IMR-90 (cell line): ENCODE measurements at regions of chrX and their contacts with region 1.

Region 1: GRCh38 chrX:95218974-95219373 is 1465.7 kb upstream of the DIAPH2 start:
- DNase-seq: no peak
- ATAC-seq: no peak
- H3K4me3 ChIP-seq: no peak overlapping the region
- H3K27ac ChIP-seq: no peak overlapping the region
- H3K4me1 ChIP-seq: no peaks in the 10 kb centered on the region
- H3K27me3 ChIP-seq: no peaks in the 10 kb centered on the region
- CTCF ChIP-seq: no peak
- POLR2A ChIP-seq: no peak
- RAD21 ChIP-seq: no peak

Region 2: DNA sequence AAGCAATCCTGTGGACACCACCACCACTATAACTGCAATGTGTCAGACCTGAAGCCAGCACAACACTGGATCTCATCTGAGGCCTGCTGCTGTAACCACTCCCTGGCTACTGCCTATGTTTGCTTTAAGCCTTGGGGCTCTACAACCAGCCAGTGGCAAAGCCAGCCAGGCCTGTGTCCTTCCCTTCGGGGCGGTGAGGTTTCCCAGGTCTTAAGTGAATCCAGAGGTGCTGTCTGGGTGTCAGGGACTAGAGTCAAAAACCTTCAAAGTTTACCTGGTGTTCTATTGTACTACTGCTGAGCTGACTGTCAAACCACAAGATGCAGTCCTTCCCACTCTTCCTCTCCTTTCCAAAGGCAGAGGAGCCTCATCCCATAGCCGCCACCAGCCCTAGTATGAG is 794.5 kb before region 1 on chrX:
- CTCF ChIA-PET with region 1: no interaction called
- POLR2A ChIA-PET with region 1: no interaction called
- dilution Hi-C with region 1: no loop called
- in situ Hi-C with region 1: no loop called
- intact Hi-C with region 1: loop called (anchors 5 kb)
- DNase-seq: no peak
- ATAC-seq: no peak
- H3K4me3 ChIP-seq: no peak overlapping the region
- H3K27ac ChIP-seq: no peak overlapping the region
- H3K4me1 ChIP-seq: no peaks in the 10 kb centered on the region
- H3K27me3 ChIP-seq: no peaks in the 10 kb centered on the region; the same call in 1 of the 2 replicates
- CTCF ChIP-seq: no peak
- POLR2A ChIP-seq: no peak
- RAD21 ChIP-seq: no peak